PC-3 (cell line): ENCODE measurements at regions of chr2 and their contacts with region 1.

Region 1: DNA sequence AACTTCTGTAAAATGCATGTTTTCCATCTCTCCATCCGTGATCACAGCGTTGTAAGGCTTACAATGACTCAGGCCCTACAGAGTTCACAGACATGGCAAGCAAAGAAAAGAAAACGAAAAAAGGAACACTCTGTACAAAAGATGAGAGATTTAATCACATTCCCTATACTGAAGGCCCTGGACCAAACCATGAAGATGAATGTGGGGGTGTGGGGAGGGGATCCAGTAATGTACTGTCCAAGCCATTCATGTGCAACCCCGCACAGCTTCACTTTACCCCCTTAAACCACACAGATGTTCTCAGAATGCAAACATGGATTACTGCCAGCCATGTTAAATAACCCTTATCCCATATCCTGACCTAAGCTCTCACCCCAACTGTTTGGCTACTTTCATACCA is 391.1 kb downstream of the NCKAP5 start:
- DNase-seq: no peak
- ATAC-seq: no peak
- H3K4me3 ChIP-seq: no peak overlapping the region
- H3K27ac ChIP-seq: no peak overlapping the region
- H3K4me1 ChIP-seq: peaks cover 4% of the 10 kb centered on the region; the same call in 1 of the 2 replicates
- H3K27me3 ChIP-seq: no peaks in the 10 kb centered on the region
- CTCF ChIP-seq: no peak

Region 2: GRCh38 chr2:133166031-133166430 is 11.2 kb before region 1 on chr2:
- CTCF ChIA-PET with region 1: no interaction called
- POLR2A ChIA-PET with region 1: interaction called, 17 read pairs
- intact Hi-C with region 1: no loop called
- DNase-seq: peak; percentile 45
- ATAC-seq: peak; percentile 75
- H3K4me3 ChIP-seq: no peak overlapping the region
- H3K27ac ChIP-seq: peak overlapping the region; percentile 63; the same call in 1 of the 2 replicates
- H3K4me1 ChIP-seq: peaks cover 20% of the 10 kb centered on the region
- H3K27me3 ChIP-seq: no peaks in the 10 kb centered on the region
- CTCF ChIP-seq: no peak